ENCODE measurements at regions of chr4 and their contacts with region 1.

Region 1: DNA sequence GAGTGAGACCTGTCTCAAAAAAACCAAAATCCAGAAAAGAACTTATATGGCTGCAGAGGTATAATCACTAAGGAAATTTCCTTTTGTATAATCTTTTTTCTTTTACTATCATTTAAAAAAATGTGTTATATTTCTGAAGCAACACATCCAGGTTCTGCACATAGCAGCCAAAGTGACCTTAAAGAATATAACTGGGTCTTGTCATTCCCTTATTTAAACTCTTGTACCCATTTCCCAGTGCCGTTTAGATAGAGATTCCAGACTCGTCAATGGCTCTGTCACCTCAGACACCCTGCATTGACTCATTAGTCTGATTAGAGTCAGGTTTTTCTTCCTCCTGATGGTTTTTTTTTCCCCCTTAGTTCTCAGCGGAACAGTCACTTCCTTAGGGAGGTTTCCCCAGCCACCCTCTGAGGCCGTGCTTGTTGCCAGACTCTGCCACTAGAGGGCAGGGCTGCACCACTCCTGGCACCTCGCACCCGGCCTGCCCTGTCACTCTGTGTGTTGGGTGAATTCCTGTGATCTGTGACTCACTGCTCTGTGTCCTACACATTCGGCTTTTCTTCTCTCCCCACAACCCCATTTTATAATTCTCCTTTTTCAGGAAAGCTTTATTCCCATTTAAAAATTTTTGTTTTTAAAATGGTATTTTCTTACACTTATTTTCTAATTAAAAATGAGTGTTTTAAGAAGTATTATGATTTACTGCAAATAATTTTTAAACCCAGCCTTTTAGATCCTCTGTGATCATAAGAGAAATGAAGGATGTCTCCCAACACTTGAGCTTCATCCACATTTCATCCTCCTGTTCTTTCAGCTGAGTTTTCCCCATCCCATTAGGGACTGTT is 32.1 kb downstream of the HTT start:
- DNase-seq: peak; percentile 73
- H3K4me3 ChIP-seq: no peak overlapping the region
- H3K27ac ChIP-seq: peak overlapping the region; percentile 55
- H3K27me3 ChIP-seq: no peaks in the 10 kb centered on the region
- CTCF ChIP-seq: peak; percentile 99

Region 2: DNA sequence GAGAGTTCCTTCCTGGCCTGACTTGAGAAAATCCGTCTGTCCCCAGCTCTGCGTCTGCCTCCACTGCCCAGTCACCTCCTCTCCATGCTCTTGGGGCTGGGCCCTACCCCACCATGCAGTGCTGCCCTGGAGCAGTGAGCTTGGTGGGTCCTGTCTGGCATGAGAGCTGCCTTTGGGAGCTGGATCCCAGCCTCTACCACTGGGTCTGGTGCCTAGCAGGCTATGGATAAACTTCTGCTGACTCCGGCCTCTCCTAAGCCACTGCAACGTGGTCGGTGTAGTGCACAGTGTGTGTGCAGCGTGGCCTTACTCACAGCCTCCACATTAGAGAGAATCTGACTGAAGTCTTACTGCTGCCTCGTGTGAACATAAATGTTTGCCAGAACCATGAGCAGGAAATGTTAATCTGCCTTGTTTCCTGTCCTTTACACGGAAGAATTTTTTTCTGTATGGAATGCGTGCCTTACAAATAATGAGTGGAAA is 15.6 kb after region 1 on chr4:
- CTCF ChIA-PET with region 1: interaction called, 51 read pairs
- POLR2A ChIA-PET with region 1: no interaction called
- DNase-seq: no peak
- H3K4me3 ChIP-seq: no peak overlapping the region
- H3K27ac ChIP-seq: peak overlapping the region; percentile 71
- H3K27me3 ChIP-seq: no peaks in the 10 kb centered on the region
- CTCF ChIP-seq: no peak

Region 3: GRCh38 chr4:3136453-3136852 is 29.9 kb after region 1 on chr4:
- CTCF ChIA-PET with region 1: interaction called, 113 read pairs
- POLR2A ChIA-PET with region 1: no interaction called
- DNase-seq: no peak
- H3K4me3 ChIP-seq: no peak overlapping the region
- H3K27ac ChIP-seq: no peak overlapping the region
- H3K27me3 ChIP-seq: no peaks in the 10 kb centered on the region
- CTCF ChIP-seq: peak; percentile 29; the same call in 1 of the 2 replicates

Region 4: GRCh38 chr4:3145234-3145924 is 38.8 kb after region 1 on chr4:
- CTCF ChIA-PET with region 1: interaction called, 15 read pairs
- POLR2A ChIA-PET with region 1: no interaction called
- DNase-seq: no peak
- H3K4me3 ChIP-seq: no peak overlapping the region
- H3K27ac ChIP-seq: no peak overlapping the region
- H3K27me3 ChIP-seq: no peaks in the 10 kb centered on the region
- CTCF ChIP-seq: peak; percentile 42

Measured in AG04450 (cell line).